IMR-90 (cell line): ENCODE measurements at regions of chr11 and their contacts with region 1.

Region 1: GRCh38 chr11:131748151-131749050 is 378.0 kb downstream of the NTM start:
- DNase-seq: peak; percentile 79
- ATAC-seq: peak; percentile 69
- H3K4me3 ChIP-seq: no peak overlapping the region
- H3K27ac ChIP-seq: no peak overlapping the region; the same call in 1 of the 2 replicates
- H3K4me1 ChIP-seq: peaks cover 17% of the 10 kb centered on the region
- H3K27me3 ChIP-seq: no peaks in the 10 kb centered on the region
- CTCF ChIP-seq: peak; percentile 88
- POLR2A ChIP-seq: no peak
- RAD21 ChIP-seq: peak; percentile 90

Region 2: DNA sequence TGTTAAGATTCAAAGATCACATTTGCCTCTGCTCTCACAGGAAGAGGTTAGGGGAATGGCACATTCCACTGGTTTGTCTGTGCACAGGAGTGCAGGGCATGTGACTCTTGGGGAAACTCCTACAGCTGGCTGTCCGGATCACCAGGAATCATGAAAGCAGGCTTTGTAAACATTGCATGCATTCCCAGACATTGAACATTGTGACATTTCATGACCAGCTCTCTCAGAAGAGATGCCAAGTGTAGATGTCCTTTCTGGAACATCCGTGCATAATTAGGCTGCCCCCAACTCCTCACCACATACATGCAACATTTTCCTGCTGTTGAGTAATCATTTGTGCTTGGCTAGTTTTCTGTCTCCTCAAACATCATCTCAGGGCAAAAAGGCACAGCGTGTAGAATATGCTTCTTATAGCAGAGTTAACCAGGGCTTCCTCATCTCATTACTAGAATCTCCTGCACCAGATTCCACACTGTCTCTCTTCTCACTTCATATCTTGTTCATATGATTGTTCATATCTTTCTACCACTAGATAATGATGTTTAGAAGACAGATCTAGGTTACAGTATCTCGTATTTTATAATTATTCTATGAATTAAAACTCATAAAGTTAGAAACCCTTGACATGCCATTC is 316.7 kb after region 1 on chr11:
- CTCF ChIA-PET with region 1: no interaction called
- POLR2A ChIA-PET with region 1: no interaction called
- dilution Hi-C with region 1: no loop called
- in situ Hi-C with region 1: no loop called
- intact Hi-C with region 1: loop called (anchors 5 kb)
- DNase-seq: peak; percentile 99
- ATAC-seq: peak; percentile 80
- H3K4me3 ChIP-seq: no peak overlapping the region
- H3K27ac ChIP-seq: peak overlapping the region; percentile 27; the same call in 1 of the 2 replicates
- H3K4me1 ChIP-seq: peaks cover 26% of the 10 kb centered on the region
- H3K27me3 ChIP-seq: no peaks in the 10 kb centered on the region
- CTCF ChIP-seq: no peak
- POLR2A ChIP-seq: peak; percentile 68
- RAD21 ChIP-seq: peak; percentile 24; the same call in 1 of the 2 replicates

Region 3: DNA sequence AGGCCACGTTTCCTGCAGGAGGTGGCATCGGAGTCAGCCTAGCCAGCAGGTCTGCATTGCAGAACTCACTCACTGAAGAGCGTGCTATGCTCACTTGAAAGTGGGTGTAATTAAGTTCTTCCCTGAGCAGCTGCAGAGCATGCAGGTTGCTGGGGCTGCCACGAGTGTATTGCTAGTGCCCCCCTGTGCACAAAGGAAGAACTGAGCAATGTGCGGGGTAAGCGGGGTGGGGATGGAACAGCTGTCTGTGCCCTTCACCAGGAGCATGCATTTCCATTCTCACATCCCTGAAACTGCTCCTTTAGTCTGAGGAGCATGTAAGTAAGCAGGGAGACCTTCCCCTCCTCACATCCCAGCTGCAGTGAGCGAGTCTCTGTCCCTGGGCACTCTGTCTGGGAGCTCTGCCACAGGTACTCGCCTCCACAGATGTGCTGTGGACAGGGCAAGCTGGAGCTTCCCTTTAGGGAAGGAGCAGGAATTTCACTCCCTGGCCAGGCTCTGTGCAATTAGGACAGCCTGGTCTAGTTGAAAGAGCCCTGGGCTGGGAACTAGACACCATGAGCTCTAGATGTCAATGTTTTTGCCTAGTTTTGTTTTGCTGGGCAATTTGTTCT is 653.8 kb after region 1 on chr11:
- CTCF ChIA-PET with region 1: no interaction called
- POLR2A ChIA-PET with region 1: no interaction called
- dilution Hi-C with region 1: no loop called
- in situ Hi-C with region 1: no loop called
- intact Hi-C with region 1: loop called (anchors 1 kb)
- DNase-seq: peak; percentile 51
- ATAC-seq: peak; percentile 88
- H3K4me3 ChIP-seq: no peak overlapping the region
- H3K27ac ChIP-seq: no peak overlapping the region
- H3K4me1 ChIP-seq: no peaks in the 10 kb centered on the region
- H3K27me3 ChIP-seq: no peaks in the 10 kb centered on the region; the same call in 1 of the 2 replicates
- CTCF ChIP-seq: peak; percentile 60
- POLR2A ChIP-seq: no peak
- RAD21 ChIP-seq: peak; percentile 85